Endothelial cell of umbilical vein (primary cell): ENCODE measurements at regions of chr16 and their contacts with region 1.

Region 1: DNA sequence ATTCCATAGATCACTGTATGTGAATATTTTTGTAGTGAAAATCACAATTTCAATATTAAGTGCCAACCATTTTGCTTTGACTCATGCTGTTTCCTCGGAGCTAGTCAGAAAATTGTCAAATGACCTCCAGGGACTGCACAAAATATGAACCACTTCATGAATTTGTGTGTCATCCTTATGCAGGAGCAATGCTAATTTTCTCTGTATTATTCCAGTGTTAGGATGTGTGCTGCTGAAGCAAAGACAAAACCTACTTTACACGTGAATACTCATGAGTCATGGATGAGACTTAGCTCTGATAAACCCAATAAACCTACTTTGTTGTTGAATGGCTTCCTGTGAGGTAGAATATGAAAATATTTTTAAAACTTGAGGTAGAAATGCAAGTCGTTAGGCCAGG is 65.2 kb downstream of the SHCBP1 start:
- DNase-seq: no peak
- H3K4me3 ChIP-seq: no peak overlapping the region
- H3K27ac ChIP-seq: no peak overlapping the region
- H3K4me1 ChIP-seq: no peaks in the 10 kb centered on the region
- H3K27me3 ChIP-seq: no peaks in the 10 kb centered on the region
- CTCF ChIP-seq: no peak
- POLR2A ChIP-seq: no peak

Region 2: DNA sequence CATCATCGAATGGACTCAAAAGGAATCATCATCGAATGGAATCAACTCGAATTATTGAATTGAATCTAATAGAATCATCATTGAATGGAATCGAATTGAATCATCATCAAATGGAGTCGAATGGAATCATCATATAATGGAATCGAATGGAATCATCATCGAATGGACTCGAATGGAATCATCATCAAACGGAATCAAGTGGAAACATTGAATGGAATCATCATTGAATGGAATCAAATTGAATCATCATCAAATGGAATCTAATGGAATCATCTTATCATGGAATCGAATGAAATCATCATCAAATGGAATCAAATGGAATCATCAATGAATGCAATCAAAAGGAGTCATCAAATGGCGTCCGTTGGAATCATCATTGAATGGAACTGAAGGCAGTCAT is 141.3 kb before region 1 on chr16:
- CTCF ChIA-PET with region 1: no interaction called
- POLR2A ChIA-PET with region 1: no interaction called
- dilution Hi-C with region 1: no loop called
- intact Hi-C with region 1: no loop called
- DNase-seq: no peak
- H3K4me3 ChIP-seq: no peak overlapping the region
- H3K27ac ChIP-seq: no peak overlapping the region
- H3K4me1 ChIP-seq: no peaks in the 10 kb centered on the region
- H3K27me3 ChIP-seq: no peaks in the 10 kb centered on the region
- CTCF ChIP-seq: no peak
- POLR2A ChIP-seq: no peak

Region 3: GRCh38 chr16:46573008-46573833 is 17.3 kb after region 1 on chr16:
- CTCF ChIA-PET with region 1: interaction called, 13 read pairs
- POLR2A ChIA-PET with region 1: no interaction called
- dilution Hi-C with region 1: no loop called
- intact Hi-C with region 1: no loop called
- DNase-seq: no peak
- H3K4me3 ChIP-seq: no peak overlapping the region
- H3K27ac ChIP-seq: no peak overlapping the region
- H3K4me1 ChIP-seq: no peaks in the 10 kb centered on the region
- H3K27me3 ChIP-seq: no peaks in the 10 kb centered on the region
- CTCF ChIP-seq: no peak
- POLR2A ChIP-seq: no peak

Region 4: GRCh38 chr16:46607529-46607928 is 51.6 kb after region 1 on chr16:
- CTCF ChIA-PET with region 1: interaction called, 92 read pairs
- POLR2A ChIA-PET with region 1: no interaction called
- dilution Hi-C with region 1: no loop called
- intact Hi-C with region 1: loop called (anchors 2 kb)
- DNase-seq: peak; percentile 61
- H3K4me3 ChIP-seq: no peak overlapping the region
- H3K27ac ChIP-seq: no peak overlapping the region
- H3K4me1 ChIP-seq: no peaks in the 10 kb centered on the region
- H3K27me3 ChIP-seq: no peaks in the 10 kb centered on the region
- CTCF ChIP-seq: no peak
- POLR2A ChIP-seq: no peak